ENCODE measurements at regions of chr4 and their contacts with region 1.

Region 1: DNA sequence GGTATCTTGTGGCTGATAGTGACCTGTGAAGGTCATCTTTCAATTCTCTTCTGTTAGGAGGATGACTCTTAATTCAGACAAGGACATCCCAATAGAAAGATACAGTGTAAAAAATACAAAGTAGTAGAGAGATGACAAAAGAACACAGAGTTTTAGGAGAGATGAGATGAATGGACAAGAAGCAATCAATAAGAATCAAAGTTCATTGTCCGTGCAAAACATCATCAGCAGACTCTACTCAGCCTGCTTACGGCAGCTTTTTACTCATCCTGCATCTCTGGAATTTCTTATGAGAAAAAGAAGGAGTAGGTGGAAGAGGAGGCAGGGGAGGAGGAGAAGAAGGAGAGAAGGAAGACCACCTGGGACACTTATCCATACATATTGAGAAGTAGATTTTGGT is 2131.7 kb downstream of the ARAP2 start:
- DNase-seq: no peak
- H3K4me3 ChIP-seq: no peak overlapping the region
- H3K27ac ChIP-seq: no peak overlapping the region
- H3K27me3 ChIP-seq: no peaks in the 10 kb centered on the region
- CTCF ChIP-seq: no peak

Region 2: DNA sequence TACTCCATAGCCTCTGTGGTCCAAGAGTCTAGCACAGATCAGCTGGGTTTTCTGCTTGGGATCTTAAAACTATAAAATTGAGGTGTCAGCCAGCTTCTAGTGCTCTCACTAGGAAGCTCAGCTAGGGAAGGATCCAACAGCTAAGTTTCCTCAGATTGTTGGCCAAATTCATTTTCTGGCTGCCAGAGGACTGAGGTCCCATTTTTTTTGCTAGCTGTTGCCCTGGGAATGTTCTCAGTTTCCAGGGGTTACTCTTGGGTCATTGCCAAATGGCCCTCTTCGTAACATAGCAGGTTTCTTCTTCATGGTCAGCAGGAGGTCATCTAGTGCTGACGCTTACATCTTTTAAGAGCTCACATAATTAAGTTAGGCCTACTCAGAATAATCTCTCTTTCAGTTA is 46.4 kb before region 1 on chr4:
- CTCF ChIA-PET with region 1: no interaction called
- POLR2A ChIA-PET with region 1: no interaction called
- DNase-seq: no peak
- H3K4me3 ChIP-seq: no peak overlapping the region
- H3K27ac ChIP-seq: no peak overlapping the region
- H3K27me3 ChIP-seq: no peaks in the 10 kb centered on the region
- CTCF ChIP-seq: no peak

Region 3: DNA sequence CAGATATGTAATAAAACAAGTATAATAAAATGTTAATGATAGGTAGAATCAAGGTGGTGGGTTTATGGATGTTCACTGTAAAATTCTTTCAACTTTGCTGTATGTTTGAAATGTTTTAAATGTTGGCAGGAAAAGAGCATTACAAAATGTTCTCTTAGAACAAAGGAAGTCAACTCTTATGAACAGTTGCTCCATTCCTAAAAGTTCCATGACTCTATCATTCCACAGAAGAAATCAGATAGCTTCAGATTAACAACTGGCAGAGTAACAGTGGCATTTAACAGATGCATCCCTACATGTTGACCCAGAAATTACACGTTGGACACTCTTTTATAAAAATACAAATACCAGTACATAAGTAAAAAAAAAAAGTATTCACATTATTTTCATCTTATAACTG is 108.0 kb after region 1 on chr4:
- CTCF ChIA-PET with region 1: interaction called, 10 read pairs
- POLR2A ChIA-PET with region 1: no interaction called
- DNase-seq: no peak
- H3K4me3 ChIP-seq: no peak overlapping the region
- H3K27ac ChIP-seq: no peak overlapping the region
- H3K27me3 ChIP-seq: no peaks in the 10 kb centered on the region
- CTCF ChIP-seq: no peak

Region 4: GRCh38 chr4:34245276-34245675 is 132.7 kb after region 1 on chr4:
- CTCF ChIA-PET with region 1: no interaction called
- POLR2A ChIA-PET with region 1: no interaction called
- DNase-seq: no peak
- H3K4me3 ChIP-seq: no peak overlapping the region
- H3K27ac ChIP-seq: no peak overlapping the region
- H3K27me3 ChIP-seq: no peaks in the 10 kb centered on the region
- CTCF ChIP-seq: no peak

Region 5: GRCh38 chr4:34271479-34272355 is 159.1 kb after region 1 on chr4:
- CTCF ChIA-PET with region 1: no interaction called
- POLR2A ChIA-PET with region 1: no interaction called
- DNase-seq: no peak
- H3K4me3 ChIP-seq: no peak overlapping the region
- H3K27ac ChIP-seq: no peak overlapping the region
- H3K27me3 ChIP-seq: no peaks in the 10 kb centered on the region
- CTCF ChIP-seq: no peak

Region 6: DNA sequence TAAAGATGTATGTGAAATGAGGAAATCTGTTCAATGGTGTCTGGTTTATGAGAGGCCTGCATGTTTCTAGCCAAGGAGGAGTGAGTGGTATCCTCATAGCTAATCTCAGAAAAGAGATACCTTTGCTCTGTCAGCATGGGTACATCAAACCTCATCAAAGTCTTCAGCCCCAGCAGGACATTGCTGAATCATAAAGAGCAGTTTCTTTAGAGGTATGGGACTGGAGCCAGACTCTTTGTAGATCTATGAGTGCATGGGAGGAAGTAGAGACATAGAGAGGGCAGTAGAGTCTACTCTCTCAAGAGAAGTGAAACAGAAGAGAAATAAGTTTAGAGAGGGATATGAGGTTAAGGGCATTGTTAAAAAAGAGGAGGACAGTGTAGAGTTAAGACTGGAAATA is 180.9 kb after region 1 on chr4:
- CTCF ChIA-PET with region 1: no interaction called
- POLR2A ChIA-PET with region 1: no interaction called
- DNase-seq: no peak
- H3K4me3 ChIP-seq: no peak overlapping the region
- H3K27ac ChIP-seq: no peak overlapping the region
- H3K27me3 ChIP-seq: no peaks in the 10 kb centered on the region
- CTCF ChIP-seq: no peak

Measured in AG04450 (cell line).